ENCODE measurements at regions of chr15 and their contacts with region 1.

Region 1: DNA sequence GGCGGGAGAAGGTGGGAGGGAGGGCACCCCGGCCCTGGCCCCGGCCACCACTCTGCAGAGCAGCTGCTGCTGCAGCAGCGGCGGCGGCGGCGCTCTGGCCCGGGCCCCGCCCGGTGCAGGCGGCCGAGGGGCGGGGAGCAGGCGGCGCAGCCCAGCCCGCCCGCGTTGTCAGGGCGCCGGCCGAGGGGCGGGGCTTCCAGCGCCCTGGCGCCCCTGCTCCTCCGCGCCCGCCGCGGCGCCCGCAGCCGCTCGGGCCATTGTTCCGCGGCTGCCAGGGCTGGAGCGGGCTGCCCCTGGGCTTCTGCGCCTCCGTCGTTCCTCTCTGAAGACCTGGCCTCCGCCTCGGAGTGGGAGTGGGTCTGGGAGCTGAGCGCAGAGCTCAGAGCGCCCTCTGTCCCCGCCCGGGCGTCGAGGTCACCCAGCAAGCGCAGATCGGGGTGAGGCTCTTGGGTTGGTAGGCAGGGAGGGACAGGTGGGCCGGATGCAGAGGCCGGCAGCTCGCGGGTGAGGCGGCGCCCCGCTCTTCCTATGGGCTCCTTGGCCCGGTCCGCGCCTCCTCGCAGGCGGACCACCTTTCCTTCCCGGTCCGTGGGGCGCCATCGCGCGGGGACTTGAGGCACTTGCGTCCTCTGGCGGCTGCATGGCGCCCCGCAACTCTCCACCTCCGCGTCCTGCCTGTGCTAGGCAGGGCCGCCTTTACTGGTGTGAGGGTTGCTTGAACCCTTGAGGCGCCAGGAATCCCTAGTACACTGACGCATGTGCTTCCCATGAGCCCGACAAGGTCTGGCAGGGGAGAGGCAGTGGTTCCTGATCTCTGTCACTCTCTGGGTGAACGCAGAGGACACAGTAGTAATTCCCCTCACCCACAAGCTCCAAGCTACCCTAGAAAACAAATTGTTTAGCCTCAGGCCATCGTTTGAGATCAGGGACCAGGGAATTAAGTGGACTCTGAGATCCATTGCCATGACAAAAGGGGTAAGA is at the start of gene LPCAT4:
- DNase-seq: peak; percentile 84 to 88
- H3K4me3 ChIP-seq: peak within 1 kb of the TSS; percentile 71
- H3K4me3 Mint-ChIP-seq: peak within 1 kb of the TSS; percentile 94
- H3K27ac Mint-ChIP-seq: peak within 1 kb of the TSS; percentile 56
- H3K4me1 ChIP-seq: peaks cover 8% of the 10 kb centered on the region; the same call in 1 of the 2 replicates
- H3K4me1 Mint-ChIP-seq: no peaks in the 10 kb centered on the region
- H3K27me3 ChIP-seq: no peaks in the 10 kb centered on the region
- H3K27me3 Mint-ChIP-seq: no peaks in the 10 kb centered on the region
- CTCF ChIP-seq: peak; percentile 80 to 91
- total RNA-seq, gene LPCAT4: 35.3 and 37.9 TPM in 2 replicates

Region 2: DNA sequence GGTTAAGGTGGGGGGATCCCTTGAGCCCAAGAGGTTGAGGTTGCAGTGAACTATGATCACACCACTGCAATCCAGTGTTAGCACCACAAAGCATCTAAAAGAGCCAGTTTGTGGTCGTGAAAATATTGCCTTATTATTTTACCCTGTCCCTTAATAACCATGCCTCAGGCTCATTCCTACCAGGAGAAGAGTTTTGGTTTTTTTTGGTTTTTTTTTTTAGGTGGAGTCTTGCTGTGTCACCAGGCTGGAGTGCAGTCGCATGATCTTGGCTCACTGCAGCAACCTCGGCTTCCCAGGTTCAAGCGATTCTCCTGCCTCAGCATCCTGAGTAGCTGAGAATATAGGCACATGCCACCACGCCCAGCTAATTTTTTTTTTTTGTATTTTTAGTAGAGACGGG is 310.5 kb before region 1 on chr15:
- CTCF ChIA-PET with region 1: interaction called, 4 read pairs
- POLR2A ChIA-PET with region 1: no interaction called
- intact Hi-C with region 1: loop called (anchors 1 kb)
- DNase-seq: no peak
- H3K4me3 ChIP-seq: no peak overlapping the region
- H3K4me3 Mint-ChIP-seq: no peak overlapping the region
- H3K27ac Mint-ChIP-seq: no peak overlapping the region
- H3K4me1 ChIP-seq: no peaks in the 10 kb centered on the region
- H3K4me1 Mint-ChIP-seq: peaks cover 5% of the 10 kb centered on the region
- H3K27me3 ChIP-seq: no peaks in the 10 kb centered on the region
- H3K27me3 Mint-ChIP-seq: no peaks in the 10 kb centered on the region
- CTCF ChIP-seq: no peak

Region 3: DNA sequence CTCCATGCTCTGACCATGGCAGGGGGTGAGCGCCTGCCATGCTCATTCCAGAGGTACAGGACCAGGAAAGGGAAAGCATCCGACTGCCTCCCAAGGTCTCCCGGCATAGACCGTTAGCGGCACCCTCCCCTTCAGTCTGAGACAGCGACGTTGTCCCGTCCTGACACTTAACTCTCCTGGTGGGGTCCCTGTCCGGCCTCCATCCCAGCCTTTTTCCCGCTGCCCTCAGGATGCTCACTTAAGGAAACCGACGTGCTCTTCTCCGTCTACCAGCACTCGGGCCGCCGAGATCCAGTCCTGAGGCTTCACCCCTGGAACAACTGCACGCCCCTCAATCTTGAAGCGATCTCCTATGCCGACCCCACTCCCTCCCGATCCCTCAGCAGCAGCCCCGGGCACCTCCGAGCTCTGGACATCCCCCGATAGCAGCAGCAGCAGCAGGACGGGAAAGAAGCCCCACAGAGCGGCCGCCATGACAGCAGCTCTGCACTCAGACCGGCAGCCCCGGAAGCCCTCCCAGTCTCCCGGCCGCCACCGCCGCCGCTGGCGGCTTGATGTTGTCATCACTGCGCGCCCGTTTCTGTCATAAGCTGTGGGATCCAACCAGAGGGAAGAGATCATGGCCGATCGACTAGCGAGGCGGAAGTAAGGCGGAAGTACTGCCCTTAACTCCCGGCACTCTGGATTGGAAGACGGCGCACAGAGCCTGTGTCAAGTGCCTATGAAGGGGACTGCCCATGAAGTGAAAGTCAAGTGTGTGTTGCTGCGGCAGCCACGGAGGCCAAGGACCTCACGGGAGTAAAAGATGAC is 265.8 kb before region 1 on chr15 and contains the starts of genes EMC7 and PGBD4:
- CTCF ChIA-PET with region 1: no interaction called
- POLR2A ChIA-PET with region 1: no interaction called
- intact Hi-C with region 1: loop called (anchors 5 kb)
- DNase-seq: peak; percentile 98
- H3K4me3 ChIP-seq: peak within 1 kb of the TSS; percentile 92
- H3K4me3 Mint-ChIP-seq: peak within 1 kb of the TSS; percentile 100
- H3K27ac Mint-ChIP-seq: peak within 1 kb of the TSS; percentile 99
- H3K4me1 ChIP-seq: peaks cover 5% of the 10 kb centered on the region; the same call in 1 of the 2 replicates
- H3K4me1 Mint-ChIP-seq: no peaks in the 10 kb centered on the region
- H3K27me3 ChIP-seq: no peaks in the 10 kb centered on the region
- H3K27me3 Mint-ChIP-seq: no peaks in the 10 kb centered on the region
- CTCF ChIP-seq: no peak
- total RNA-seq, gene EMC7: 70.2 and 74.2 TPM in 2 replicates
- total RNA-seq, gene PGBD4: 1.5 and 1.7 TPM in 2 replicates

Region 4: GRCh38 chr15:34241372-34242330 is 125.7 kb before region 1 on chr15:
- CTCF ChIA-PET with region 1: interaction called, 5 read pairs
- POLR2A ChIA-PET with region 1: no interaction called
- intact Hi-C with region 1: loop called (anchors 1 kb)
- DNase-seq: peak in 1 of 2 experiments; percentile 16
- H3K4me3 ChIP-seq: no peak overlapping the region
- H3K4me3 Mint-ChIP-seq: no peak overlapping the region
- H3K27ac Mint-ChIP-seq: no peak overlapping the region
- H3K4me1 ChIP-seq: 0 out of 2 replicates have a peak, but pooled peaks cover 5% of the 10 kb centered on the region
- H3K4me1 Mint-ChIP-seq: no peaks in the 10 kb centered on the region
- H3K27me3 ChIP-seq: no peaks in the 10 kb centered on the region
- H3K27me3 Mint-ChIP-seq: no peaks in the 10 kb centered on the region
- CTCF ChIP-seq: peak; percentile 58 to 62

Region 5: DNA sequence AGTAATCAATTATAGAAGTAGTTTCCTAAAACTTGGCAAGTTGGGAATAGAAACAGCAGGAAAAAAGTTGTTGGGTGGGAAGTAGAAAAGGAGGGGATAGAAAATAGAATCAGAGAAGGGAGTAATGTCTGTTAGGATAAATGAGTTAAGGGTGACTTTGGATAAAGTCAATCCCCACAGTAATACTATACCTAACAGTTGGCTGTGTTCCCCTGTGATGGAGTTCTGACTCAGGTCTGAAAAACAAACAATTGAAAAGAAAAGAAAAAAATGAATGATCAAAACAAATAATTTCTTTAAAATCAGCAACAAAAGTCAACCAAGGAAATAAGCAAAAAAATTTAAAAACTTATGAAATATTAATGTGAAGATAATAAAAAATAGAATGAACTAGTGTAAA is 92.2 kb before region 1 on chr15:
- CTCF ChIA-PET with region 1: no interaction called
- POLR2A ChIA-PET with region 1: no interaction called
- intact Hi-C with region 1: no loop called
- DNase-seq: no peak
- H3K4me3 ChIP-seq: no peak overlapping the region
- H3K4me3 Mint-ChIP-seq: no peak overlapping the region
- H3K27ac Mint-ChIP-seq: no peak overlapping the region
- H3K4me1 ChIP-seq: no peaks in the 10 kb centered on the region
- H3K4me1 Mint-ChIP-seq: no peaks in the 10 kb centered on the region
- H3K27me3 ChIP-seq: no peaks in the 10 kb centered on the region
- H3K27me3 Mint-ChIP-seq: no peaks in the 10 kb centered on the region
- CTCF ChIP-seq: no peak

Region 6: GRCh38 chr15:34337557-34338306 is 29.7 kb before region 1 on chr15 and contains the start of gene SLC12A6:
- CTCF ChIA-PET with region 1: interaction called, 13 read pairs
- POLR2A ChIA-PET with region 1: interaction called, 4 read pairs
- intact Hi-C with region 1: loop called (anchors 1 kb)
- DNase-seq: peak; percentile 91 to 94
- H3K4me3 ChIP-seq: peak within 1 kb of the TSS; percentile 89
- H3K4me3 Mint-ChIP-seq: peak within 1 kb of the TSS; percentile 94
- H3K27ac Mint-ChIP-seq: no peak within 1 kb of the TSS
- H3K4me1 ChIP-seq: no peaks in the 10 kb centered on the region
- H3K4me1 Mint-ChIP-seq: no peaks in the 10 kb centered on the region
- H3K27me3 ChIP-seq: no peaks in the 10 kb centered on the region
- H3K27me3 Mint-ChIP-seq: no peaks in the 10 kb centered on the region
- CTCF ChIP-seq: no peak
- total RNA-seq, gene SLC12A6: 8.9 and 12.6 TPM in 2 replicates

Region 7: DNA sequence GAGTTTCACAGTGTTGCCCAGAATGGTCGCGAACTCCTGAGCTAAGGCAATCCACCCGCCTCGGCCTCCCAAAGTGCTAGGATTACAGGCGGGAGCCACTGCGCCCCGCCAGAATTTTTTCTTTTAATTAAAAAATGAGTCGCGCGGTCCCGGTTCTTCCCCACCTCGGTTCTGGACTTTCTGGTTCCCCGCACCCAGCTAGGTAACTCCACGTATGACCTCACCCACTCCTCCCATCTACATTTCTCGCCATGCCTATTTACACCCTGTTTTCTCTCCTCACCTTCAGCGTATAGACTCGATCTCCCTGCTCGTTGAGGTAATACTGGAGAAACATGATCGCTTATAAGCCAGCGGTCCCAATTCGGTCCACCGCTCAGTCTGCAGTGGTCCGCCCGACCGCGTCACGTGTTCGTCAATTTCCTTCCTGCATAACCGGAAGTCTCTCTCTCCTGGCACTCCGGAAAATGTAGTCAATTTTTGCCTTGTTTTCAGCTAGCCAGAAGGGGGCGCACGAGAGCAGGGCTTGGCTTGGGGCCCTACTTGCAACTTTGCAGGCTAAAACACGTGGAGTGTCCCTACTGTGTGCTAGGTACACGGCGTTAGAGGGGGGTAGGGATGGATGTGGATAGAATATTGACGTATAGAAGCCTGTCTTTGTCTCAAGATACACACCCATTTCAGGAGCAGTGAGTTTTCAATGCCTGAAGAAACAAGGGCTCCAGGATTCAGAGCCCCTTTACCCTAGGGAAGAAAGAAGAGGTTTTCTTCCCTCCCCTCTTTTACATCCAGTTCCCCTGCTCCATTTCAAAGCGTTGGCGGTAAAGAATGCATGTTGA is 24.4 kb before region 1 on chr15 and contains the starts of genes NOP10 and NUTM1:
- CTCF ChIA-PET with region 1: interaction called, 13 read pairs
- POLR2A ChIA-PET with region 1: interaction called, 5 read pairs
- intact Hi-C with region 1: loop called (anchors 1 kb)
- DNase-seq: peak; percentile 90 to 93
- H3K4me3 ChIP-seq: peak within 1 kb of the TSS; percentile 80
- H3K4me3 Mint-ChIP-seq: no peak within 1 kb of the TSS
- H3K27ac Mint-ChIP-seq: no peak within 1 kb of the TSS
- H3K4me1 ChIP-seq: no peaks in the 10 kb centered on the region
- H3K4me1 Mint-ChIP-seq: no peaks in the 10 kb centered on the region
- H3K27me3 ChIP-seq: no peaks in the 10 kb centered on the region
- H3K27me3 Mint-ChIP-seq: no peaks in the 10 kb centered on the region
- CTCF ChIP-seq: peak; percentile 85 to 93
- total RNA-seq, gene NOP10: 171 and 175 TPM in 2 replicates
- total RNA-seq, gene NUTM1: not detected in 2 replicates

Region 8: GRCh38 chr15:34470091-34470490 is 102.7 kb after region 1 on chr15:
- CTCF ChIA-PET with region 1: no interaction called
- POLR2A ChIA-PET with region 1: no interaction called
- intact Hi-C with region 1: no loop called
- DNase-seq: no peak
- H3K4me3 ChIP-seq: no peak overlapping the region
- H3K4me3 Mint-ChIP-seq: no peak overlapping the region
- H3K27ac Mint-ChIP-seq: no peak overlapping the region
- H3K4me1 ChIP-seq: no peaks in the 10 kb centered on the region
- H3K4me1 Mint-ChIP-seq: no peaks in the 10 kb centered on the region
- H3K27me3 ChIP-seq: no peaks in the 10 kb centered on the region
- H3K27me3 Mint-ChIP-seq: peaks cover 8% of the 10 kb centered on the region
- CTCF ChIP-seq: no peak

Region 9: DNA sequence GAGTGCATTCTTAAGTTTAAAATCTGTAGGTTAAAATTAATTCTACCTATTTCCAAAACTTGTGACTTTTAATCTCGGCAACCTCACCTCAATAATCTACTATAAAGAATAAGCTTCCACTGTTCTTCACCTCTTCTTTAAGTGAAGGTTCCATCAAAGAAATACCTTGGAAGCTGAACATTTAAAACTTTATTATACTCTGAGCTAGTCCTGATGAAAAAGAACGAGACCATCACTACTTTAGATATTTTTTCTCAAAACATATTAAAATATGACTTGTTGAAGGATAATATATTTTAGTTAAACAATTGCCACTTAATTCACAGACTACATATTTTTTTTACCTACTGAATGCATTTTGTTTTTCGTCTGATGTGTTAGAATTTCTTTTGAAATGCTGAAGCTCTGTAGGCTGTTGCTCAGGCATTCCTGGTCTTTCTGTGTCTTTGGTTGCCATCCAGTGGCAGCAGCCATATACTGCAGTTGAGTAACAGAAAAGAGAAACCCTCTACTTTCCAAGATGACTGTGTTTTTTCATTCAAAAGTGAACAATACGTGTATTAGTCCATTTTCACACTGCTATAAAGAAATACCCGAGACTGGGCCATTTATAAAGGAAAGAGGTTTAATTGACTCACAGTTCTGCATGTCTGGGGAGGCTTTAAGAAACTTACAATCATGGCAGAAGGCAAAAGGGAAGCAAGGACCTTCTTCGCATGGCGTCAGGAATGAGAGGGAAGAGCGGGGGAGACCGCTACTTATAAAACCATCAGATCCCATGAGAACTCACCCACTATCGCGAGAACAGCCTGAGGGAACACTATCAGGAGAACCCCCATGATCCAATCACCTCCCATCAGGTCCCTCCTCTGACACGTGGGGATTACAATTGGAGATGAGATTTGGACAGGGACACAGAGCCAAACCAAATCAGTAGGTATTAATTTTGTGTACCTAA is 220.6 kb after region 1 on chr15:
- CTCF ChIA-PET with region 1: no interaction called
- POLR2A ChIA-PET with region 1: no interaction called
- intact Hi-C with region 1: loop called (anchors 2 kb)
- DNase-seq: peak; percentile 52 to 71
- H3K4me3 ChIP-seq: no peak overlapping the region
- H3K4me3 Mint-ChIP-seq: peak overlapping the region; percentile 65
- H3K27ac Mint-ChIP-seq: no peak overlapping the region
- H3K4me1 ChIP-seq: peaks cover 4% of the 10 kb centered on the region; the same call in 1 of the 2 replicates
- H3K4me1 Mint-ChIP-seq: no peaks in the 10 kb centered on the region
- H3K27me3 ChIP-seq: no peaks in the 10 kb centered on the region; the same call in 1 of the 2 replicates
- H3K27me3 Mint-ChIP-seq: peaks cover 19% of the 10 kb centered on the region
- CTCF ChIP-seq: peak; percentile 71 to 74

Measured in Caco-2 (cell line).